Common myeloid progenitor, CD34-positive (primary cell): ENCODE measurements at regions of chr10 and their contacts with region 1.

Region 1: GRCh38 chr10:6171881-6172695 is 30.6 kb upstream of the PFKFB3 start:
- DNase-seq: peak; percentile 93 to 94 (median 94)
- H3K4me3 ChIP-seq: peak overlapping the region in 3 of 7 experiments; percentile 42 to 65 (median 48)
- H3K27ac ChIP-seq: peak overlapping the region in 1 of 2 experiments; percentile 31
- H3K4me1 ChIP-seq: peaks cover 0 to 71% (median 63%) of the 10 kb centered on the region in 4 experiments
- H3K27me3 ChIP-seq: no peaks in the 10 kb centered on the region

Region 2: DNA sequence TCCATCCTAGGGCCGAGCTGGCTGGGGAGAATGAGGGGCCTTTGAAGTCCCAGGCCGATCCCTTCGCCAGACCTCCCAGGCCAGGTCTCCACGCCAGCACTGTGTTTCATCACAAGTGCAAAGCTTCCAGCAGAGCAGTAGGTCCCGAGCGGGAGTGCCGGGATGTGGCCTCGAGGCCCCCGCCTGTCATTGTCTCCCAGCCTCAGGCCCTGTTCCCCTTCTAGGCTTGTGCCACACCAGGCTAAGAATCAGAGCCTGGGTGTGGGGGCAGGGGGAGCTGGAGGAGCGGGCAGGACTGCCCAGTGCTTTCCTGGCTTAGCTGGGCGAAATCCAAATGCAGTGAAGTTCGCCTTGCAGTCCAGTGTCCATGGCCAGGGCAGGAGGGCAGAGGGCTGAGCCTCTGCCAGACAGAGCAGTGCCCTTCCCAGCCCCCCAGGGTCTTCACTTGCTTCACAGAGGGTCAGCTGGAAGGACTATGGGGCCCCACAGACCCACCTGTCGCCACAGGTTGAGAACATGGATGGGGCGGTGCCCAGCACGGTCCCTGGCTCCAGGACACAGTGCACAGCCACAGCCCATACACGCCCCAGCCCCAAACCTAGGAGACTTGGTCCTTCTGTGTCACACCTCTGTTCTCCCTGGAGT is 10.5 kb after region 1 on chr10:
- CTCF ChIA-PET with region 1: interaction called, 10 read pairs
- POLR2A ChIA-PET with region 1: no interaction called
- DNase-seq: no peak
- H3K4me3 ChIP-seq: no peak overlapping the region
- H3K27ac ChIP-seq: no peak overlapping the region
- H3K4me1 ChIP-seq: peaks cover 0 to 13% (median 5%) of the 10 kb centered on the region in 4 experiments
- H3K27me3 ChIP-seq: no peaks in the 10 kb centered on the region

Region 3: DNA sequence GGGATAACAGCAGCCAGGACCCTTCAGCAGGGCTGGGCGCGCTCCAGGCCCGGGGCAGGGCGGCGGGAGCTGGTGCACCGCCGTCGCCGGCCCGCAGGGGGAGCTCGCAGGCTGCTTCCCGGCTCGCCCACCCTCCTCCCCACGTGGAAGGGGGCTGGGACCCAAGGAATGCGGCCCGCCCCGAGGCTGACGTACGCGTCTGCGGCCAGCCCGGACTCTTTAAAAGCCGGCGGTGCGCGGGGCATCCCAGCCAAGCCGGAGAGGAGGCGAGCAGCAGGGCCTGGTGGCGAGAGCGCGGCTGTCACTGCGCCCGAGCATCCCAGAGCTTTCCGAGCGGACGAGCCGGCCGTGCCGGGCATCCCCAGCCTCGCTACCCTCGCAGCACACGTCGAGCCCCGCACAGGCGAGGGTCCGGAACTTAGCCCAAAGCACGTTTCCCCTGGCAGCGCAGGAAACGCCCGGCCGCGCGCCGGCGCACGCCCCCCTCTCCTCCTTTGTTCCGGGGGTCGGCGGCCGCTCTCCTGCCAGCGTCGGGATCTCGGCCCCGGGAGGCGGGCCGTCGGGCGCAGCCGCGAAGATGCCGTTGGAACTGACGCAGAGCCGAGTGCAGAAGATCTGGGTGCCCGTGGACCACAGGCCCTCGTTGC is 30.7 kb after region 1 on chr10 and contains the start of gene PFKFB3:
- CTCF ChIA-PET with region 1: interaction called, 25 read pairs
- POLR2A ChIA-PET with region 1: interaction called, 9 read pairs
- DNase-seq: peak; percentile 87 to 93 (median 92)
- H3K4me3 ChIP-seq: peak within 1 kb of the TSS; percentile 65 to 83 (median 73)
- H3K27ac ChIP-seq: no peak within 1 kb of the TSS
- H3K4me1 ChIP-seq: peaks cover 0 to 43% (median 39%) of the 10 kb centered on the region in 4 experiments
- H3K27me3 ChIP-seq: peaks cover 0 to 5% (median 4%) of the 10 kb centered on the region in 5 experiments